ENCODE measurements at regions of chr9 and their contacts with region 1.

Region 1: DNA sequence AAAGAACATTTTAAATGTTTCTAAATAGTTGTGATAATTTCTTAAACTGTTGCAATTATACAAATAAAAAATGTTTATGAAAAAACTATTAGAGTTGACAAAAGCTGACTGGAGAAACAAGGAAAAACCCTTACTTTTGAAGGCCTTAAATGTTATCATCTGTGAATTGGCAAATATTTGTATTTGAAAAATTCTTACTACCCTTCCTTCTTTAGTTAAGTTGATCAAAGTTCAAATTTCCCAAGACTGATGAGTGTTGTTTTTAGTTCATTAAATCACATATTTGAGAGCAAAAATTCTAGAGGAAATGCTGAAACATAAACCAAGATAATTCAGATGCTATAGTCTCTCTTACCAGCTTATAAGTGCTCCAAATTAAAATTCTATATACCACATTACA is 2.6 kb upstream of the SLC35D2 start:
- DNase-seq: no peak
- H3K4me3 ChIP-seq: no peak overlapping the region
- H3K27ac ChIP-seq: no peak overlapping the region
- H3K4me1 ChIP-seq: peaks cover 15% of the 10 kb centered on the region
- H3K27me3 ChIP-seq: no peaks in the 10 kb centered on the region
- CTCF ChIP-seq: no peak

Region 2: GRCh38 chr9:94490465-94490864 is 1895.7 kb before region 1 on chr9:
- CTCF ChIA-PET with region 1: no interaction called
- POLR2A ChIA-PET with region 1: no interaction called
- intact Hi-C with region 1: no loop called
- DNase-seq: no peak
- H3K4me3 ChIP-seq: no peak overlapping the region
- H3K27ac ChIP-seq: no peak overlapping the region
- H3K4me1 ChIP-seq: no peaks in the 10 kb centered on the region
- H3K27me3 ChIP-seq: peaks cover 6% of the 10 kb centered on the region
- CTCF ChIP-seq: no peak

Region 3: DNA sequence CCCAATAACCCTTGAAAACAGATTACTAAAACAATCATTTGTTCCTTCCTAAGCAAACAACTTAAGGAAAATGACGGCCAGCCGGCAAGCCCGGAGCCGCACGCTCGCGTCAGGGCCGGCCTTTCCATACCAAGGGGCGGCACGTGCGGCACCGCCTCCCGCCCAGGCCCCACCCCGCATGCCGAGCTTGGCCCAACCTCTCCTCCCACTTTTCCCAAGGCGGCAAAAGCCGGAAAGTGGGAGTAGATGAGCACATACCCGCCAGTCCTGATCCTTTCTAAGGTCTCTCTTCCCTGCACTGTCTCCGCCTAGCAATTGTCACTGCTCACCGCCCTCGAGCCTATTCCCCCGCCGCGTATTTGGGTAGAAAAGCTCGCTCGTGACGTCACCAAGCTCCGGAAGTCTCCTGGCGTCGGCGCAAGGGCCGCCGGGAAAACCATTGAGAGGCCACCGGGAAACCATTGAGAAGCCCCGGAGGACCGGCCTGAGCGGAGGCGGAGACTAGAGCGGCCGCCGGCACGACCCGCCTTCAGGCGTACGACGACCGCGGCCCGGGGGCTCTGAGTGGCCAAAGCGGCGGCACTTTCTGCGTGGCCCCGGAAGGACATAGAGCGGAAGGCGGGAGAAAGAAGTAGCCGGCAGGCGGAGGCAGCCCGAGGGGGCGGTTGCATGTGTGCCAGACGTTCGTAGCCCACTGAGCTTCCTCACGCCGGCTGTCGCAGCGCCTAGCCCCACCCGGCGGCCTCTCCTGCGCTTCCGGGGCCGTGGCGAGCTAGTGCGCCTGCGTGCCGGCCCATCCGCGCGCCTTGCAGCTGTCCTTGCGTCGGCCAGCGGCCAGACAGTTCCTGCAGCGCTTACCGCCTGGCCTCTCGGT is 1247.1 kb after region 1 on chr9 and contains the starts of genes NCBP1 and TSTD2:
- CTCF ChIA-PET with region 1: no interaction called
- POLR2A ChIA-PET with region 1: interaction called, 35 read pairs
- intact Hi-C with region 1: no loop called
- DNase-seq: peak; percentile 99
- H3K4me3 ChIP-seq: peak within 1 kb of the TSS; percentile 96
- H3K27ac ChIP-seq: peak within 1 kb of the TSS; percentile 99
- H3K4me1 ChIP-seq: peaks cover 16% of the 10 kb centered on the region
- H3K27me3 ChIP-seq: no peaks in the 10 kb centered on the region
- CTCF ChIP-seq: no peak
- total RNA-seq, gene NCBP1: 49.8 and 57.9 TPM in 2 replicates
- total RNA-seq, gene TSTD2: 29.7 and 31.2 TPM in 2 replicates

Measured in A673 (cell line).